WTC11 (cell line): ENCODE measurements at regions of chr20 and their contacts with region 1.

Region 1: GRCh38 chr20:3248167-3248992 is 9.4 kb upstream of the SLC4A11 start:
- DNase-seq: peak; percentile 72
- ATAC-seq: peak; percentile 68
- H3K4me3 Mint-ChIP-seq: peak overlapping the region; percentile 61
- H3K27ac Mint-ChIP-seq: no peak overlapping the region
- H3K4me1 Mint-ChIP-seq: peaks cover 16% of the 10 kb centered on the region
- H3K27me3 Mint-ChIP-seq: peaks cover 37% of the 10 kb centered on the region
- CTCF ChIP-seq: no peak

Region 2: DNA sequence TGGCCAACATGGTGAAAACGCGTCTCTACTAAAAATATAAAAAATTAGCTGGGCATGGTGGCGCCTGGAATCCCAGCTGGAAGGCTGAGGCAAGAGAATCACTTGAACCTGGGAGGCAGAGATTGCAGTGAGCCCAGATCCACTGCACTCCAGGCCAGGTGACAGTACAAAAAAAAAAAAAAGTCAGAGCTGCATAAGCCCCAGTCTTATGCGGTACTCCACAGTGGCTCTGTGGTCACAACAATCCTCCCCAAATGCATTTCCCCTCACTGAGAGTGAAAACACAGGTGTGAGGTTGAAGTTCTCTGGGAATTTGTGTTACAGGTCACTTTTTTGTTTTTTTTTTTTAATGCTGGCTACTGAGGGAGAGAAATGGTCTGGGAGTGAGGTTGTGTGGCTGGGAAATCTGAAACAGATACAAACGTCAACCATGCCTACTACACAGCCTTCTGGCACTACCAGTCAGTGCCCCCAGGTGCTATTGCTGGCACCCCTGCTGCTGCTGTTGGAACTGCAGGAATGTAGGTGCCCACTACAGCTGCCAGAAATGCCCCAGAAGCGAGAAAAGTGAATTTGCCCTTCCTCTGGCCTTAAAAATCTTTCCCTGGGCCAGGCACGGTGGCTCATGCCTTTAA is 196.9 kb before region 1 on chr20:
- CTCF ChIA-PET with region 1: interaction called, 15 read pairs
- POLR2A ChIA-PET with region 1: no interaction called
- DNase-seq: no peak
- ATAC-seq: no peak
- H3K4me3 Mint-ChIP-seq: no peak overlapping the region
- H3K27ac Mint-ChIP-seq: no peak overlapping the region
- H3K4me1 Mint-ChIP-seq: peaks cover 6% of the 10 kb centered on the region
- H3K27me3 Mint-ChIP-seq: no peaks in the 10 kb centered on the region
- CTCF ChIP-seq: no peak

Region 3: DNA sequence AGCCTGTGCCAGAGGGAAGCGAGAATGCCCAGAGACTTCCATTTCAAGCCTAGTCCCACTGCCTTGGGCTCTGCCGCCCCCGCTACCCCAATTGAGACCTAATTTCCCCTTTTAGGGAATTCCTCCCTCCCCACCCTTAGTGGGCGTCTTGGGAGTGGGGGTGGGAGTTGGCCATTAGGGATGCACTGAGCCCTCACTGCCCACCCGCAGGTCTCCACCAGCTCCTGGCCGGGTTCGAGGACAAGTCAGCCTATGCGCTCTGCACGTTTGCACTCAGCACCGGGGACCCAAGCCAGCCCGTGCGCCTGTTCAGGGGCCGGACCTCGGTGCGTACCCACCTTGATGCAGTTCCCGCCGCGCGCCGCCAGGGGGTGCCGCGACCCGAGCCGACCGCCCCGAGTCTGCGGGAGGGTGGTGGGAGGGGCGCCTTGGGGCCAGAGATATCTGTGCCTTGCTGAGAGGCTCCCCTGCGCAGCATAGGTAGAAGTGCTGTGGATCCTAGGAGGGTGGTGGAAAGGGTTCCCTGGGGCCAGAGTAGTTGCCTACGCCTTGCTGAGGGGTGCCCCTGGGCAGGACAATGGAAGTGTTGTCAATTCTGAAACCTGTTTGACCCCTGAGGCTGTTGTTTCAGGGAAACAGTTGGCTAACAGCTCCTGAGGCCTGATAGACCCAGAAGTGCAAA is 29.9 kb before region 1 on chr20:
- CTCF ChIA-PET with region 1: interaction called, 30 read pairs
- POLR2A ChIA-PET with region 1: interaction called, 4 read pairs
- DNase-seq: peak; percentile 91
- ATAC-seq: peak; percentile 94
- H3K4me3 Mint-ChIP-seq: no peak overlapping the region
- H3K27ac Mint-ChIP-seq: no peak overlapping the region
- H3K4me1 Mint-ChIP-seq: no peaks in the 10 kb centered on the region
- H3K27me3 Mint-ChIP-seq: no peaks in the 10 kb centered on the region
- CTCF ChIP-seq: peak; percentile 99

Region 4: GRCh38 chr20:3262566-3262965 is 14.2 kb after region 1 on chr20:
- CTCF ChIA-PET with region 1: interaction called, 22 read pairs
- POLR2A ChIA-PET with region 1: no interaction called
- DNase-seq: no peak
- ATAC-seq: no peak
- H3K4me3 Mint-ChIP-seq: no peak overlapping the region
- H3K27ac Mint-ChIP-seq: no peak overlapping the region
- H3K4me1 Mint-ChIP-seq: no peaks in the 10 kb centered on the region
- H3K27me3 Mint-ChIP-seq: no peaks in the 10 kb centered on the region
- CTCF ChIP-seq: no peak

Region 5: GRCh38 chr20:3276680-3277015 is 28.3 kb after region 1 on chr20:
- CTCF ChIA-PET with region 1: interaction called, 92 read pairs
- POLR2A ChIA-PET with region 1: no interaction called
- DNase-seq: peak; percentile 23
- ATAC-seq: peak; percentile 82
- H3K4me3 Mint-ChIP-seq: no peak overlapping the region
- H3K27ac Mint-ChIP-seq: no peak overlapping the region
- H3K4me1 Mint-ChIP-seq: no peaks in the 10 kb centered on the region
- H3K27me3 Mint-ChIP-seq: no peaks in the 10 kb centered on the region
- CTCF ChIP-seq: no peak; the same call in 1 of the 2 replicates

Region 6: GRCh38 chr20:3312940-3313682 is 64.7 kb after region 1 on chr20:
- CTCF ChIA-PET with region 1: interaction called, 46 read pairs
- POLR2A ChIA-PET with region 1: no interaction called
- DNase-seq: no peak
- ATAC-seq: no peak
- H3K4me3 Mint-ChIP-seq: no peak overlapping the region
- H3K27ac Mint-ChIP-seq: no peak overlapping the region
- H3K4me1 Mint-ChIP-seq: no peaks in the 10 kb centered on the region
- H3K27me3 Mint-ChIP-seq: no peaks in the 10 kb centered on the region
- CTCF ChIP-seq: no peak